Heart right ventricle (tissue), 16 donors: ENCODE measurements at regions of chr6 and their contacts with region 1.

Region 1: GRCh38 chr6:151323791-151324487 is 67.4 kb downstream of the ZBTB2 start:
- DNase-seq: peak; percentile 81 to 83
- ATAC-seq: peak; percentile 87 to 95 (median 90)
- H3K4me3 ChIP-seq: peak overlapping the region in 3 of 10 donors; percentile 5 to 58 (median 12)
- H3K27ac ChIP-seq: peak overlapping the region in 8 of 10 donors; percentile 33 to 76 (median 56)
- H3K4me1 ChIP-seq: peaks cover 0 to 30% (median 27%) of the 10 kb centered on the region in 9 donors
- H3K27me3 ChIP-seq: peaks cover 0 to 24% (median 6%) of the 10 kb centered on the region in 7 donors
- CTCF ChIP-seq: peak; percentile 97 to 99 (median 98)

Region 2: GRCh38 chr6:151014404-151015100 is 309.4 kb before region 1 on chr6:
- intact Hi-C with region 1: loop called (anchors 1 to 5 kb)
- DNase-seq: peak; percentile 61 to 68
- ATAC-seq: peak; percentile 59 to 84 (median 79)
- H3K4me3 ChIP-seq: peak overlapping the region in 4 of 10 donors; percentile 13 to 20 (median 18)
- H3K27ac ChIP-seq: no peak overlapping the region
- H3K4me1 ChIP-seq: peaks cover 0 to 7% (median 0%) of the 10 kb centered on the region in 9 donors
- H3K27me3 ChIP-seq: no peaks in the 10 kb centered on the region
- CTCF ChIP-seq: peak; percentile 96 to 100 (median 98)